ENCODE measurements at regions of chr1 and their contacts with region 1.

Region 1: DNA sequence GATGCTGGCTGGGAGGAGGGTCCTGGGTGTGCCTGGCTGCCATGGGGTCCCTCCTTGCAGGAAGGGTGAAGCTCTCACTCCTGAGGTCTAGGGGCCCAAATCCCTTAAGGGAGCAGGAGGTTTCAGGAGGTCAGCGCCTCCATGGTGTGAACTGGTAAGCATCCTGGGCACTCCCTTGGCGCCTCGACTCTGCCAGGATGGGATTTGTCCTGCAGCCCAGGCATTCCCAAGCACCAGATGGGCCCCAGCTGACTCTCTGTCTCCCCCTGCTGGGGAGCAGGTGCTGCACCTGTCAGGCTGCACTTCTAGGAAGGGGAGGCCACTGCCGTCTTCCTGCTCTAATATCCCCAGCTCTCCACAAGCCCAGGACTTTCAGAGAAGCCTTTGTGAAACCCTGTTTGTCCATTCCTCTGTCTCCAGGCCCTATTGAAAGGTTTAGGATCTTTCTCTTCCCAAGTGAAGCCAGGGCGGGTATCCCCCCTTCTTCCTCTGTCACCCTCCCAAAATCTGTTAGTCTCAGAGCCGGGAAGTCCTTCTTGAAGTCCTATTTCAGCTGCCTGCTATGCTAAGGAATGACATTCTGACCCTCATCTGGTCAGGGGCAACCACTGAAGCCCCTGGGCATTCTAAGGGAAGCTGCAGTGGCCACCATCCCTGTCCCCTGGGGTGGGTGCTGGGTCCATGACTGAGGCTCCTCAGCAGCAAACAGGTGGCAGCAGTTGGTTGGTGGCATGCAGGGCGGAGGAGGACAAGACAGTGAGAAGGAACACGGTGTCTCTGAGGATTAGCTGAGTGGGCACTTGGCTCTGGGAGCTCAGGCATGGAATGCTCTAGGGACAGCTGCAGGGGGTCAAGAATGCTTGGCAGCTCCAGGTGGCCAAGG is 3.3 kb downstream of the MYBPH start:
- DNase-seq: peak; percentile 51
- H3K4me3 ChIP-seq: no peak overlapping the region
- H3K27ac ChIP-seq: no peak overlapping the region
- H3K4me1 ChIP-seq: no peaks in the 10 kb centered on the region
- H3K27me3 ChIP-seq: no peaks in the 10 kb centered on the region
- CTCF ChIP-seq: peak; percentile 84 to 96
- POLR2A ChIP-seq: no peak

Region 2: GRCh38 chr1:203017692-203018091 is 154.7 kb before region 1 on chr1:
- CTCF ChIA-PET with region 1: no interaction called
- POLR2A ChIA-PET with region 1: no interaction called
- dilution Hi-C with region 1: no loop called
- intact Hi-C with region 1: no loop called
- DNase-seq: no peak
- H3K4me3 ChIP-seq: no peak overlapping the region
- H3K27ac ChIP-seq: no peak overlapping the region
- H3K4me1 ChIP-seq: no peaks in the 10 kb centered on the region
- H3K27me3 ChIP-seq: no peaks in the 10 kb centered on the region
- CTCF ChIP-seq: no peak
- POLR2A ChIP-seq: no peak

Region 3: DNA sequence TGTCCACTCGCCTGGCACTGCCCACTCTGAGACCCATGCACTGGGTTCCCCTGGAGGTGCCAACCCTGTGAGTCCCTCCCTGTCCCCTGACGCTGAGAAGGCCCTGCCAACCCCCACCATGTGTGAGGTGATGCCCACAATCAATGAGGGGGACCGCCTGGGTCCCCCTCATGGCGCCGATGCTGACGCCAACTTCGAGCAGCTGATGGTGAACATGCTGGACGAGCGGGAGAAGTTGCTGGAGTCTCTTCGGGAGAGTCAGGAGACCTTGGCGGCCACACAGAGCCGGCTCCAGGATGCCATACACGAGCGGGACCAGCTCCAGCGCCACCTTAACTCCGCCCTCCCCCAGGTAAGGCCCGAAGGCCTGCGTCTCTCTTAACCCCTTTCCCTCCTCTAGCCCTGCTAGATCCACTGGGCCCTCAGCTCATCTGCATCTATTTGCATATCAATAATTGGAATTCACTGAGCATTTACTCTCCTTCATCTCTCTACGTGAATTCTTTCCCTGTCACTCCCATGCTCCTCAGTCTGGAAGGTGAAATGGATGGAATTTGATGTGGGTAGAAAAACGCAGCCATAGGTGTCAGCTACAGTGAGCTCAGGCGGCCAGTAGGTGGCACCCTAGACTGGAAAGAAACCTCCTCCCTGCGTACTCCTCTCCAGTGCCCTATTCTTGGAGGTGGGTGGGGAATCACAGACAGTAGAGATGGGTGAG is 133.3 kb before region 1 on chr1:
- CTCF ChIA-PET with region 1: interaction called, 98 read pairs
- POLR2A ChIA-PET with region 1: no interaction called
- dilution Hi-C with region 1: no loop called
- intact Hi-C with region 1: loop called (anchors 1 kb)
- DNase-seq: peak; percentile 57
- H3K4me3 ChIP-seq: no peak overlapping the region
- H3K27ac ChIP-seq: no peak overlapping the region
- H3K4me1 ChIP-seq: no peaks in the 10 kb centered on the region
- H3K27me3 ChIP-seq: peaks cover 0 to 18% of the 10 kb centered on the region in 2 experiments
- CTCF ChIP-seq: peak; percentile 86
- POLR2A ChIP-seq: no peak

Region 4: DNA sequence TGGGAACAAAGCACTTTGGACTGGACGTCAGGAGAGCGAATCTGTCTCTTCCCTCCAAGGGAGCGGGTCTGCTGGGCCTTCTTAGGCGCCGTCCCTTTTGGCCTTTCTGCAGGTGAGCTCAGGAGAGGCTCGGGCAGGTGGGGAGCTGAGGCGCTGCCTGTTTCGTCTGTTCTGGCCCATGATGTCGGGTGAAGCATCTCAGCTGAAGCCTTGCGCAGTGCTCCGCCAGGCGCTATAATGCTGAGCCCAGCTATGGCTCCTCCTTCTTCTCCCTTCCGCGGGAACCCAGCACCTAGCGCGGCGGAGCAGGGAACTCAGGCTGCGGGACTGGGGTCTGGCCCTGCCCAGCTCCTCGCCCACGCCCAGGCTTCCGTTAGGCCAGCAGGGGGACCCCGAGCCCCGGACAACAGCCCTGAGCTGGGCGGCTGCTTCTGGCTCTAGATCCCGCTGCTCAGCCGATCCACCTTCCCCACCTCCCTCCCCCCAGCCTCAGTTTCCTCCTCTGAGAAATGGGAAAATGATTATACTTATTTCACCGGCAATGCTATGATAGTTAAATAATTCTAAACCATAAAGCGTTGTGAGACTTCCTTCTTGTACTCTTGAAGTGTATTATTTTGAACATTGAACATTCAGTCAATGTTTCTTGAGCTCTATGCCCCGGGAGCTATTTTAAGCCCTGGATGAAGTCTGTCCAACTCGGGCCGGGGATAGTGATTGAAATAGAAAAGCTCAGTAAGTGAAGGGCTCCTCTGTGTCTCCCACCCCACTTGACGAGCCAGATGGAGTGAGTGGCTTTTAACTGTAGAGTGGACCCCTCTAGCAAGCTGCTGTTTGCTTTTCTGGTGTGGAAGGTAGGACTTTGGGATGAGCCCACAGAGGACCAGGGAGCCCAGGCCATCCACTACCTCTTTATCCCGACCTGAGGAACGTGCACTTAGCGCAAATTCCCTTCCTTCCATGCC is 54.5 kb before region 1 on chr1:
- CTCF ChIA-PET with region 1: interaction called, 317 read pairs
- POLR2A ChIA-PET with region 1: interaction called, 3 read pairs
- dilution Hi-C with region 1: no loop called
- intact Hi-C with region 1: loop called (anchors 1 kb)
- DNase-seq: peak; percentile 51
- H3K4me3 ChIP-seq: no peak overlapping the region
- H3K27ac ChIP-seq: no peak overlapping the region
- H3K4me1 ChIP-seq: no peaks in the 10 kb centered on the region
- H3K27me3 ChIP-seq: peaks cover 19 to 29% of the 10 kb centered on the region in 2 experiments
- CTCF ChIP-seq: peak; percentile 70 to 95
- POLR2A ChIP-seq: no peak

Region 5: DNA sequence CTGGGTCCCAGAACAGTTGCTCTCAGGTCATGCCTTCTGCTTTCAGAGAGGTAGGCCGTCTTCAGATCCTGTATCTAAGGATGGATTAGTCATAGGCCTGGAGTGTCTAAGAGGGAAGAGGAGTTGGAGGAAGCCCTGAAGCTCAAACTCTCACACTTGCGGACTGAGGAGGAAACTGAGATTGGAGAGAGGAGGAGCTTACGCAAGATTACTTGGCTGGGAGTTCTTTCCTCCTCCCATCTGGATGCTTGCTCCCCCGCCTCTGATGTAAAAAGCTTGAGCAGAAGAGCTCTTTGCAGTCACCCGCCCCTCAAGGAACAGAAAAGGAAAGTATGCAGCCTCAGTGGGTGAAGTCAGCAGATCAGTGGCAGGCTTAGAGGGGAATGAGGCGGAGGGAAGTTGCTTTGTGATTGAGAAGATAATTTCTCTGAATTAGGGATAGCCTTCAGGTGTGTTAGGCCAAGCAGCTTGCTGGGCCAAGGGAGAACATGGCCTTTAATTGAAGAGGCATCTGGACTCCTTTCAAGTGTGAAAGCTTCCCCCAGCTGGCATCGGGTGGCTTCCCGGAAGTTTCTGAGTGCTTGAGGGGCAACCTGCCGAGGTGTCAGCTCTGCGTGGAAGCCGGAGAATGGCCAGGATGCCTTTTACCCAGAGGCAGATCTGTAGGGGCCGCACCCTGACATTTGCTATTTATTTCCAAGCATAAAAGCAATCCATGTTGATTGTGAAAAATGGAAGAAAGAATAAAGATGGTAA is 38.2 kb before region 1 on chr1:
- CTCF ChIA-PET with region 1: interaction called, 14 read pairs
- POLR2A ChIA-PET with region 1: no interaction called
- dilution Hi-C with region 1: no loop called
- intact Hi-C with region 1: no loop called
- DNase-seq: no peak
- H3K4me3 ChIP-seq: no peak overlapping the region
- H3K27ac ChIP-seq: no peak overlapping the region
- H3K4me1 ChIP-seq: no peaks in the 10 kb centered on the region
- H3K27me3 ChIP-seq: peaks cover 8 to 19% of the 10 kb centered on the region in 2 experiments
- CTCF ChIP-seq: no peak
- POLR2A ChIP-seq: no peak

Region 6: DNA sequence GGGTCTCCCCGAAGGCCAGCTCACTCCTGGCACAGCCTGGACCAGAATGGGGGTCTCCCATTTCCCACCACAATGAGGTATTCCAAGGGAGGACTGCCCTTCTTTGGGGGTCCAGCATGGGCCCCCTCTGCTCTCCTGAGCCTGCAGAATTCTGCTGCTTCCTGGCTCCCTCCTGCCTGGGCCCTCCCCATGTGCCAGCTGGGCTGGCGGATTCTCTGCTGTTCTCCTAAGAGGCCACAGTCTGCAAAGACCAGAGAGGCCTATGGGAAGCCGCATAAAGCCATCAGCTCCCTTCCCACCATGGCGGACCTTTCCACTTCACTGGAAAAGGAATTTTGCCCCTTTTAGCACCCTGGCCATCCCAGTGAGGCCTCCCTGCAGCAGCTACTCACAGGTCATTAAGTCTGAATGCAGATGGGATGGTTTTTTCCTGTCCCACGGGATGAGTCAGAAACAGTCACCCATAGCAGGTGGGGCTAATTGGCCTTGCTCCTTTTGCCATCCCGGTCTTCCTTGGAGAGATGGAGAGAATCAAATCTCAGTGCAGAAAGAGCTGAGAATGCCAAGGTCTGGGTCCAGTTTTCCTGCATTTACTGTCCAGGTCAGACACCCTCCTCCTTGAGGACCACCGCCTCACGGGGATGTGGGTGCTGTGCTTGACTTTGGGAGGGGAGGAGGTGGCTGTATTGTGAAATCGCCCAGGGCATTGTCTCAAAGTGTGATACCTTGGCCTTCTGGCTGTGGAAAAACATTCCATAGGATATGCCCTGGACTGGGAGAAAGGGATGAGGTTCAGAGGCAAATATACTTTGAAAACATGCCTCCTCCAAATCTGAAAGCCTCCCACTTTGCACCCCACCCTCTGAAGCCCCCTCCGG is 20.0 kb before region 1 on chr1:
- CTCF ChIA-PET with region 1: interaction called, 34 read pairs
- POLR2A ChIA-PET with region 1: no interaction called
- dilution Hi-C with region 1: no loop called
- intact Hi-C with region 1: no loop called
- DNase-seq: peak; percentile 8
- H3K4me3 ChIP-seq: no peak overlapping the region
- H3K27ac ChIP-seq: peak overlapping the region; percentile 62
- H3K4me1 ChIP-seq: peaks cover 28% of the 10 kb centered on the region
- H3K27me3 ChIP-seq: peaks cover 0 to 4% of the 10 kb centered on the region in 2 experiments
- CTCF ChIP-seq: no peak
- POLR2A ChIP-seq: no peak

Region 7: DNA sequence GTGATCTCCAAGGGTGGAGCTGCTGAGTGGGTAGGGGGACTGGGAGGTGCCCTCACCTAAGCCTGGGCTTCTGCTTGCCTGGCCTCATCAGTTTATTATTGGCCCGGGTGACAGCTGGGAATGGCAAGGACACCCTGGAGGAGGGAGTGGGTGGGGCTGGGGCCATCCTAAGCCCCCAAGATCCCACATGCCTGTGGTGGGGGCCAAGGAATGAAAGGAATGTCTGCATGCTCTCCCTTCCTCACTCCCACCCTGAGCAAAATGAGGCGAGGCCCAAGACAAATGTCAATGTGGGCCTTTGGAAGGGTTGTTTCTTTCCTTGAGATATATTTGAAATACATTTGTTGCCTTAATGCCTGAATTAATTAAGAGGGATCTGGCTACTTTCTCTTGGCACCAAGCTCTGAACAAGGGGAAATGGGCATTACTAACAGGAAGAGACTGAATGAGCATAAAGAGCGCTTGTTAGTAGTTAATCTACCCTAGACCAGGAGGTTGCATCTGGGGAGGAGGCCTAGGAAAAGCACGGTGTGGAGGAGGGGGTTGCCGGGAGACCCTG is 33.8 kb after region 1 on chr1:
- CTCF ChIA-PET with region 1: interaction called, 18 read pairs
- POLR2A ChIA-PET with region 1: no interaction called
- dilution Hi-C with region 1: no loop called
- intact Hi-C with region 1: no loop called
- DNase-seq: peak; percentile 13
- H3K4me3 ChIP-seq: no peak overlapping the region
- H3K27ac ChIP-seq: no peak overlapping the region
- H3K4me1 ChIP-seq: no peaks in the 10 kb centered on the region
- H3K27me3 ChIP-seq: peaks cover 2 to 14% of the 10 kb centered on the region in 2 experiments
- CTCF ChIP-seq: no peak
- POLR2A ChIP-seq: no peak